ENCODE measurements at regions of chr12 and their contacts with region 1.

Region 1: DNA sequence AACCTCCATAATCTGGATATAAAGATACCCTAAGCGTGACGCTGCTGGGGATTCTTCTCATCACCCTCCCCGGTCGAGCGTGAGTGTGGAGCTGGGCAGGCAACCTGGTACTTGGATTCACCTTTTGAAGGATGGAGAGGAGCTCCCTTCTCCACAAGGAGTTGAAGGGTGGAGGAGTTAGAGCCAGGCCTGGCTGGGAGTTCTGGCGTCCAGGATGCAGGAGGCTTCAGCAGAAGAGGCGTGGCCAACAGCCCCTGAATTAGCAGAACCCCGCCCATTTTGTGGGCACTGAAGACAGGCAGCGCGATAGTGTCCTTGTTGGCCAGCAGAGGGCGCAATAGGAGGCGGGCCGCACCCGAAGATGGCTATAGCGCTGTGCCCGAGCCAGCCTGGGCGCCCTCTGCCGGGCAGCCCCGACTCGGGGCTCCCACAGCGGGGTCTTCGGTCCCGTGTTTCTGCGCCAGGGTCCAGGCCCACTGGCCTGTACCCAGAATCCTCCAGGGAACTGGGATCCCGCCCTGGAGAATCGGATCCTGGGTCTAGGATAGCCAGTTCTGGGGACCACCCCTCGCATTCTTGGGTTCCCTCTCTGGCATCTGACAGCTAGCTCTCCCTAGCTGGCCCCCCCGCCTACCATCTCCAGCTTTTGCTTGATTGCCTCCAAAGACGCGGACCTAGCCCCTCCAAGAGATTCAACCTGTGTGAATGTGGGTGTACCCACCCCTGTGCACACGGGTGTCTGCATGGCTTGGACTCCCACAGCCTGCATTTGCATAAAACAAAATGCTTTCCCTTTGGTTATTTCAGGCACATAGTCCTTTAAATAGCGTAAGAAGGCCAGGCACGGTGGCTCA is 26.0 kb upstream of the SMUG1 start:
- DNase-seq: peak; percentile 92
- CTCF ChIP-seq: peak; percentile 99

Region 2: DNA sequence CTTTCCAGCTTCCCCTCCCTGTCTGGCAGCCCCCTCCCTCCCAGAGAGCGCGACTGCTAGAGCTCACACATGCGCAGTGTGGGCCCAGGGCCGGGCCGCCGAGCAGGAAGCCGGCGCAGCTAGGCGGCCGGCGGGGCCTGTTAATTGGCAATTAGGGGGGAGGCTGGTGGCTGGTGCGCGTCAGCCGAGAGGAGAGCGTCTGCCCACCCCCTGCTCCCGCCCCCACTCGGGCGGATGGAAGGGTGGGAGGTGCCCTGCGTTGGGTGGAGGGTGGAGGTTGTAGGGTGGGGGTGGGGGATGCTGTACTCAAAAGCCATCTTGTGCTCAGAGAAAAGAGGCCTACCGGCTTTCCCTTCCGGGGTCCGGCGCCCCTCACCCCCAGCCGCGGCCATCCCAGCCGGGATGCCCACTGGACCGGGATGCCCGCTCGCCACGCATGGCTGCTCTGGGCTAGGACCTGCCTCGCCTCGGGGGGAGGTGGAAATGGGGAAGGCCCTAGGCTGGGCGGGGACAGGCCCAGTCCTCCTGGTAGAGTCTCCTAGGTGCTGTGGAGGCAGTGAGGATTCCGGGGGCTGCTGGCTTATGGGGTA is 196.8 kb before region 1 on chr12:
- CTCF ChIA-PET with region 1: interaction called, 27 read pairs
- POLR2A ChIA-PET with region 1: no interaction called
- DNase-seq: peak; percentile 94
- CTCF ChIP-seq: no peak

Region 3: GRCh38 chr12:54068418-54069070 is 146.2 kb before region 1 on chr12:
- CTCF ChIA-PET with region 1: no interaction called
- POLR2A ChIA-PET with region 1: no interaction called
- DNase-seq: no peak
- CTCF ChIP-seq: no peak

Region 4: DNA sequence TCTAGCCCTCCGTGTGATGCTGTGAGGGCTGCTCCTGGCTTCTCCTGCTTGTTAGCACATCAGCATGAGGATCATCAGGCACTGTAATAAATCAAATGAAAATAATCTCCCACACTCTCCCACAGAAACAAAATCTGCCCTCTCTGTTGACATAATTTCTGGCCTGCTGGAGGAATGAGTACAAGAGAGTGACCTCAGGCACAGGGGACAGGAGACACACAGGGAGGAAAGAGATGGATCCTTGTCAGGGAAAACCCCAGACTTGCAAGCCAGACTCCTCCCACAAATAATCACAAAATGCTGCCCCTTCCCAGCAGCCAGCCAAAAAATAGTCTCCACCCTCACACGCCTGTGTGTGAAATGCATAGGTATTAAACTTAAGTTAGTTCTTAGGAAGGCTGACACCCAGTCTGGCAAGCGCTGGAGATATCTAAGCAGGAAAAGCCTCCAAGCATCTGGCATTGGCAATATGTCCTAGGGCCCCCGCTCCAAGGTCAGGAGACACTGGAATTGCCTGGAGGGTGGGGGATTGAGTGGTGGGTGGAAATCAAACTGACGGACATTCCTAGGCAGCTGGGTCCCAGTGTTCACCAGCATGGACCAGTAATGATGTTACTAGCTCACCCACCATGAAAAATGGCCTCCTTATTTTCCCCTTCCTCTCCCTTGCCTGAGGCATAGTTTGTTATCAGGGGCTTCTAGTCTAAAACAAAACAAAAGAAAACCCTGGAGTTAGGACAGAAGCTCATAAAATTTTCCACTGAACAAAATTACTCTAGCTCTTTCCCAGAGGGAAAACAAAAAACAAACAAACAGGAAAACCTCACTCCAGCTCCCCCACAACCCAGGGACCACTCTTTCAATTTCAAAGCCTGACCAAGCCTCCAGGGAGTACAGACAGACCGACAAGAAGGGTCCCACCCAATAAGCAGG is 47.9 kb before region 1 on chr12:
- CTCF ChIA-PET with region 1: no interaction called
- POLR2A ChIA-PET with region 1: no interaction called
- DNase-seq: no peak
- CTCF ChIP-seq: no peak

Region 5: GRCh38 chr12:54229624-54230212 is 14.9 kb after region 1 on chr12:
- CTCF ChIA-PET with region 1: interaction called, 27 read pairs
- POLR2A ChIA-PET with region 1: no interaction called
- DNase-seq: no peak
- CTCF ChIP-seq: no peak

Region 6: GRCh38 chr12:54294152-54294952 is 79.6 kb after region 1 on chr12:
- CTCF ChIA-PET with region 1: interaction called, 14 read pairs
- POLR2A ChIA-PET with region 1: no interaction called
- DNase-seq: peak; percentile 79
- CTCF ChIP-seq: peak; percentile 91

Region 7: GRCh38 chr12:54359033-54359761 is 144.4 kb after region 1 on chr12:
- CTCF ChIA-PET with region 1: interaction called, 60 read pairs
- POLR2A ChIA-PET with region 1: no interaction called
- DNase-seq: peak; percentile 97
- CTCF ChIP-seq: no peak